ENCODE measurements at regions of chr19 and their contacts with region 1.

Region 1: DNA sequence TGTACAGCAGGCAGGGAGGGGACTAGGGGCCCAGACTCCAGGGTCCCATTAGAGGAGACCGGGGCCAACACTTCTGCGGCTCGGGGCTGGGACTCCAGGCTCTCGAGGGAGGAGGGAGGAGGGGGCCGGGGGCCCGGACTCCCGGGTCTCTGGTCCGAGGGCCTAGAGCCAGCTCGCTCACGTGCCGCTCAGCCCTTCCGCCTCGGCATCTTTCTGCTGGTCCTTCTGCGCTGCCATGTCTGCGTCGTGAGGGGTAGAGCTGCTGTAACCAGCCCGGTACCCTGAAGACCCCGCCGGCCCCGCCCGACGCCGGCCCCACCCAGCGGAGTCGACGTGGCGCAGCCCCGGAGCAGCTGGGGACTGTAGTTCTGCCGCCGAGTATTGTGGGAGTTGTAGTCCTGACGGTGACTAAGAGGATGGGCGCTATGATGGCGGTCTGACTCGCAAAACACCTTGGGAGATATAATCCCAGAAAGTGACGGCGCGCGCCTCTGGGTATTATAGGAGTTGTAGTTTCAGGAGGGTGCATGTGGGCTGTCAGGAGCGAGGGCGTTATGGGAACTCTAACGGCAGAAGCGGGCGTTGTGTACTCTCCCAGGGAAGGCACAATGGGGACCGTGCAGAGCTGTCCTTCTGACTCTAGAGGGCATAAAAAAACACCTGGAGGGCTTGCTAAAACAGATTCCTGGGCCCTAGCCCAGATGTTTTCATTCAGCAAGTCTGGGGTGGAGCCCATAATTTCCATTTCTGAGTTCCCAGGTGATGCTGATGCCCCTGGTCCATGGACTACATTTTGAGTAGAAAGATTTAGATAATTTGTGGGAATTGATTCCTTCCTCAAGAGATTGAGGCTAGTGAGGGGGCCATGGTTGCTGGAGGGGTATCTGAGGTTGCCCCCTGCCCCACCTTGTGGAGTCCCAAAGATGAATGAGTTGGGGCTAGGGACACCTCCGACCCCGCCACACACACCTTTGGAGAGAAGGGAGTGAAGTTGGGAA is at the start of gene RABAC1:
- DNase-seq: peak; percentile 90 to 93 (median 92)
- ATAC-seq: peak; percentile 88 to 93 (median 91)
- H3K4me3 ChIP-seq: peak within 1 kb of the TSS; percentile 74 to 99 (median 95)
- H3K27ac ChIP-seq: peak within 1 kb of the TSS; percentile 60 to 94 (median 88)
- H3K4me1 ChIP-seq: peaks cover 3 to 28% (median 17%) of the 10 kb centered on the region in 12 donors
- H3K27me3 ChIP-seq: no peaks in the 10 kb centered on the region
- CTCF ChIP-seq: peak in 4 of 12 donors; percentile 7 to 17 (median 14)
- POLR2A ChIP-seq: peak in 1 of 2 donors; percentile 45
- total RNA-seq, gene RABAC1: 43.2 to 128 (median 67.2) TPM

Region 2: DNA sequence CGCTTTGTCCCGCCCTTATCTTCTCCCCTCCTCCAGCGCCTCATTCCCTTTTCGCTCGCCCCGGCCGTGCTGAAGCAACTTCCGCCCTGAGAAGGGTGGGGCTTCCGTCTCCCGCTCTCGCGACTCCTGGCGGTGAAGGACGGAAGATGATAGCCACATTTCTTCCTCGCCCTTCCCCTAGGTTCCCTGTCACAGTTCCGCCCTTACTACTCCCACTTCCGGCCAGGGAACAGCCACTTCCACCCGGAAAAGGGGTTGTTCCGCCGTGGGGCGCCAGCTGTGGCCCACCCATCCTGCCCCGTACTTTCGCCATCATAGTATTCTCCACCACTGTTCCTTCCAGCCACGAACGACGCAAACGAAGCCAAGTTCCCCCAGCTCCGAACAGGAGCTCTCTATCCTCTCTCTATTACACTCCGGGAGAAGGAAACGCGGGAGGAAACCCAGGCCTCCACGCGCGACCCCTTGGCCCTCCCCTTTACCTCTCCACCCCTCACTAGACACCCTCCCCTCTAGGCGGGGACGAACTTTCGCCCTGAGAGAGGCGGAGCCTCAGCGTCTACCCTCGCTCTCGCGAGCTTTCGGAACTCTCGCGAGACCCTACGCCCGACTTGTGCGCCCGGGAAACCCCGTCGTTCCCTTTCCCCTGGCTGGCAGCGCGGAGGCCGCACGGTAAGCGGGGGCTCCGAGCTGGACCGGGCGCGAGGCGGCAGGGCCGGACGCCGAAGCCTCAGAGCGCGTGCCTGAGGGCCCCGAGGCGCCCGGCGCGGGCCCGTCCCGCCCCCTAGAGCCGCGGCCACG is 99.5 kb before region 1 on chr19 and contains the start of gene RPS19:
- intact Hi-C with region 1: loop called in 2 of 10 experiments (anchors 5 kb)
- DNase-seq: peak; percentile 98 to 99 (median 99)
- ATAC-seq: peak; percentile 95 to 97 (median 96)
- H3K4me3 ChIP-seq: peak within 1 kb of the TSS; percentile 74 to 94 (median 86)
- H3K27ac ChIP-seq: peak within 1 kb of the TSS; percentile 91 to 99 (median 97)
- H3K4me1 ChIP-seq: peaks cover 6 to 43% (median 30%) of the 10 kb centered on the region in 12 donors
- H3K27me3 ChIP-seq: no peaks in the 10 kb centered on the region
- CTCF ChIP-seq: peak; percentile 44 to 81 (median 66)
- POLR2A ChIP-seq: peak; percentile 31 to 78
- total RNA-seq, gene RPS19: 161 to 1,072 (median 585) TPM

Region 3: DNA sequence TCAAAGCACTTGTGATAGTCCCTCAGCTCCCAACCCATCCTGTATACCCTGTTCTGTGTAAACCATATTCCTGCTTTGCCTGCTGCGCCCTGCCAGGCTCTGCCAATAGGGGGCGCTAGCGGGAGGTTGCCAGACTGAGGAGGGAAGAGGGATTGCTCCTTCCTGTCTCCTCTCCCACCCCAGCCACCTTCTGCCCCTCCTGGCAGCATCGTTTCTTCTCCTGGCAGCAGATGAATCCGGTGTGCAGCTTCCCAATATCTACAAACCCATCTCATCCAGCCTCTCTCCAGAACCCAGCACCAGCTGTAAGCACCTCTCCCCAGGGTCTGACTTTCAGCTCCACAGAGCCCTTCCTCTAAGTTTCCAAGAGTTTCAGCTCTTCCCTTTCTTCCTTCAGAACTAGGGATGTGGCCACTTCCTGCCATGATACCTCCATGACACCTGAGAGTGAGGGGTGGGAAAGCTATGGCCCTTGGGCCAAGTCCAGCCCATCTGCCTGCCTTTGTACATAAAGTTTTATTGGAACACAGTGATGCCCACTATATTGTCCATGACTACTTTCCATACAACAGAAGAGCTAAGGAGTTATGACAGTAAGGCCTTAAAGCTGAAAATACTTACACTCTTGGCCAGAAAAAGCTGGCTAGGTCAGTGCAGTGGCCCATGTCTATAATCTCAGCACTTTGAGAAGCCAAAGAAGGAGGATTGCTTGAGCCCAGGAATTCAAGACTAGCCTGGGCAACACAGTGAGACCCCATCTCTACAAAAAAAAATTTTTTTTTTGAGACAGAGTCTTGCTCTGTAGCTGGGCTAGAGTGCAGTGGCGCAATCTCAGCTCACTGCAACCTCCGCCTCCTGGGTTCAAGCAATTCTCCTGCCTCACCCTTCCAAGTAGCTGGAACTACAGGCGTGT is 69.2 kb after region 1 on chr19:
- intact Hi-C with region 1: no loop called
- DNase-seq: peak in 2 of 5 donors; percentile 5 to 47
- ATAC-seq: no peak
- H3K4me3 ChIP-seq: no peak overlapping the region
- H3K27ac ChIP-seq: no peak overlapping the region
- H3K4me1 ChIP-seq: peaks cover 0 to 19% (median 5%) of the 10 kb centered on the region in 12 donors
- H3K27me3 ChIP-seq: peaks cover 0 to 11% (median 0%) of the 10 kb centered on the region in 9 donors
- CTCF ChIP-seq: peak in 11 of 12 donors; percentile 7 to 44 (median 23)
- POLR2A ChIP-seq: no peak

Region 4: GRCh38 chr19:42075616-42076379 is 116.4 kb after region 1 on chr19 and contains the start of gene ZNF574:
- intact Hi-C with region 1: loop called in 1 of 10 experiments (anchors 5 kb)
- DNase-seq: peak; percentile 98 to 99 (median 99)
- ATAC-seq: peak; percentile 98 to 100 (median 99)
- H3K4me3 ChIP-seq: peak within 1 kb of the TSS; percentile 62 to 96 (median 86)
- H3K27ac ChIP-seq: peak within 1 kb of the TSS; percentile 89 to 99 (median 94)
- H3K4me1 ChIP-seq: peaks cover 0 to 26% (median 17%) of the 10 kb centered on the region in 12 donors
- H3K27me3 ChIP-seq: no peaks in the 10 kb centered on the region
- CTCF ChIP-seq: no peak
- POLR2A ChIP-seq: peak in 1 of 2 donors; percentile 74
- total RNA-seq, gene ZNF574: 6.3 to 17.7 (median 8.8) TPM